A549 (cell line): ENCODE measurements at regions of chr19 and their contacts with region 1.

Region 1: GRCh38 chr19:47243776-47244547 is 12.4 kb upstream of the CCDC9 start:
- DNase-seq: peak; percentile 94 to 97
- ATAC-seq: peak; percentile 86 to 94
- H3K4me3 ChIP-seq: peak overlapping the region; percentile 49
- H3K27ac ChIP-seq: peak overlapping the region; percentile 82 to 98
- H3K4me1 ChIP-seq: peaks cover 33% of the 10 kb centered on the region
- CTCF ChIP-seq: peak; percentile 99
- EP300 ChIP-seq: peak; percentile 22 to 84; a peak in 3 of 5 replicates
- POLR2A ChIP-seq: no peak; the same call in 1 of the 2 replicates
- RAD21 ChIP-seq: peak; percentile 96 to 99

Region 2: DNA sequence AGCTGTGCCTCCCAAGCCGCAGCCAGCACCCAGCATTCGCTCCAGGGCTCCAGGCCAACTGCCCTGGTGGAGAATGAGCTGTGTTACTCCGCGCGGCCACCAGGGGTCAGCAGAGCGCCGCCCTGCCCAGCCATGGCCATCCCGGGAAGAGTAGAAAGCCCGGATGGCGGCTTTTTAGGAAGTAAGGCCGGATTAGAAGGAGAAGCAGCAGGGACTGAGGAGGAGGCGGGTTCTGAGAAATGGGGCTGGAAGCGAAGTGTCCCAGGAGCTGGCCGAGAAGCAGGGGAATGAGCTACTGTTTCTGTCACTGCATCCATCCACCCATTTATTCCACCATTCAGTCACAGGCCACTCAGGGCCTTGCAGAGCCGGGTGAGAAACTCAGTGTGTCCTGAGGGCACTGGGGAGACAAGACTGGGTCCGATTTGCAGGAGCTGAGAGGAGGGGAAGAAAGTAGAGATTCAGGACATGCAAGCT is 230.9 kb before region 1 on chr19:
- CTCF ChIA-PET with region 1: interaction called, 37 read pairs
- POLR2A ChIA-PET with region 1: interaction called, 4 read pairs
- DNase-seq: peak in 1 of 2 experiments; percentile 83
- ATAC-seq: peak; percentile 94 to 96
- H3K4me3 ChIP-seq: no peak overlapping the region
- H3K27ac ChIP-seq: peak overlapping the region; percentile 47 to 76
- H3K4me1 ChIP-seq: peaks cover 4% of the 10 kb centered on the region; the same call in 1 of the 3 replicates
- CTCF ChIP-seq: peak; percentile 95
- EP300 ChIP-seq: no peak
- POLR2A ChIP-seq: no peak
- RAD21 ChIP-seq: peak; percentile 98

Region 3: GRCh38 chr19:47130591-47131227 is 113.3 kb before region 1 on chr19 and contains the start of gene SAE1:
- CTCF ChIA-PET with region 1: interaction called, 65 read pairs
- POLR2A ChIA-PET with region 1: interaction called, 7 read pairs
- DNase-seq: peak; percentile 100
- ATAC-seq: peak; percentile 91 to 92
- H3K4me3 ChIP-seq: peak within 1 kb of the TSS; percentile 71
- H3K27ac ChIP-seq: peak within 1 kb of the TSS; percentile 92 to 93
- H3K4me1 ChIP-seq: peaks cover 35% of the 10 kb centered on the region
- CTCF ChIP-seq: peak; percentile 50
- EP300 ChIP-seq: no peak
- POLR2A ChIP-seq: peak; percentile 90
- RAD21 ChIP-seq: peak in 1 of 2 experiments; percentile 53; a peak in 2 of 5 replicates
- polyA plus RNA-seq, gene SAE1: 229 and 249 TPM in 2 replicates

Region 4: GRCh38 chr19:47168065-47168464 is 75.9 kb before region 1 on chr19:
- CTCF ChIA-PET with region 1: interaction called, 364 read pairs
- POLR2A ChIA-PET with region 1: interaction called, 3 read pairs
- DNase-seq: no peak
- ATAC-seq: no peak
- H3K4me3 ChIP-seq: no peak overlapping the region
- H3K27ac ChIP-seq: no peak overlapping the region
- H3K4me1 ChIP-seq: no peaks in the 10 kb centered on the region
- CTCF ChIP-seq: no peak
- EP300 ChIP-seq: no peak
- POLR2A ChIP-seq: no peak
- RAD21 ChIP-seq: no peak

Region 5: GRCh38 chr19:47195434-47195833 is 48.5 kb before region 1 on chr19:
- CTCF ChIA-PET with region 1: interaction called, 30 read pairs
- POLR2A ChIA-PET with region 1: interaction called, 5 read pairs
- DNase-seq: no peak
- ATAC-seq: no peak
- H3K4me3 ChIP-seq: no peak overlapping the region
- H3K27ac ChIP-seq: no peak overlapping the region
- H3K4me1 ChIP-seq: peaks cover 11% of the 10 kb centered on the region
- CTCF ChIP-seq: no peak
- EP300 ChIP-seq: no peak
- POLR2A ChIP-seq: no peak
- RAD21 ChIP-seq: no peak

Region 6: GRCh38 chr19:47225746-47226425 is 18.1 kb before region 1 on chr19:
- CTCF ChIA-PET with region 1: interaction called, 893 read pairs
- POLR2A ChIA-PET with region 1: interaction called, 118 read pairs
- DNase-seq: peak; percentile 89 to 91
- ATAC-seq: peak; percentile 35 to 70
- H3K4me3 ChIP-seq: peak overlapping the region; percentile 89
- H3K27ac ChIP-seq: peak overlapping the region; percentile 97 to 98
- H3K4me1 ChIP-seq: peaks cover 36% of the 10 kb centered on the region
- CTCF ChIP-seq: peak; percentile 28; the same call in 1 of the 3 replicates
- EP300 ChIP-seq: peak in 1 of 2 experiments; percentile 51; a peak in 1 of 5 replicates
- POLR2A ChIP-seq: peak; percentile 100
- RAD21 ChIP-seq: peak in 1 of 2 experiments; percentile 30; a peak in 1 of 5 replicates

Region 7: DNA sequence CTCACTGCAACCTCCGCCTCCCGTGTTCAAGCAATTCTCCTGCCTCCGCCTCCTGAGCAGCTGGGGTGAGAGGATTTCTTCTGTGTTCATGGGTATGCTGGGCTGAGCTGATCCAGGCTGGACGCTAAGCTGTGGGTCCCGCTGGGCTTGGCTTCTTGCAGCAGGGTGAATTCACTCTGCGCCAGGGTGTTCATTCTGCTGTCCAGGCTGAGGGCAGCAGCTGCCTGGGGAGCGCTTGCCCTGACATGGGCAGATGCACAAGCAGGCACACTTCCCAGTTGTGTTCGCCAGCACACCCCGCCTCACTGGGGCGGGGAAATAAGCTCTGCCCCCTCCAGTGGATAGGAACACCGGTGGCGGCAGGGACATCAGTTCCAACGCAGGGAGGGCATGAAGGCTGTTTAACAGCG is 23.4 kb after region 1 on chr19:
- CTCF ChIA-PET with region 1: interaction called, 32 read pairs
- POLR2A ChIA-PET with region 1: interaction called, 3 read pairs
- DNase-seq: no peak
- ATAC-seq: no peak
- H3K4me3 ChIP-seq: no peak overlapping the region
- H3K27ac ChIP-seq: no peak overlapping the region
- H3K4me1 ChIP-seq: peaks cover 2% of the 10 kb centered on the region; the same call in 1 of the 3 replicates
- CTCF ChIP-seq: no peak
- EP300 ChIP-seq: no peak
- POLR2A ChIP-seq: no peak
- RAD21 ChIP-seq: no peak

Region 8: GRCh38 chr19:47330466-47330869 is 86.5 kb after region 1 on chr19:
- CTCF ChIA-PET with region 1: no interaction called
- POLR2A ChIA-PET with region 1: no interaction called
- DNase-seq: no peak
- ATAC-seq: no peak
- H3K4me3 ChIP-seq: no peak overlapping the region
- H3K27ac ChIP-seq: peak overlapping the region; percentile 45 to 49; a peak in 4 of 6 replicates
- H3K4me1 ChIP-seq: peaks cover 24% of the 10 kb centered on the region
- CTCF ChIP-seq: no peak
- EP300 ChIP-seq: no peak
- POLR2A ChIP-seq: no peak
- RAD21 ChIP-seq: no peak

Region 9: DNA sequence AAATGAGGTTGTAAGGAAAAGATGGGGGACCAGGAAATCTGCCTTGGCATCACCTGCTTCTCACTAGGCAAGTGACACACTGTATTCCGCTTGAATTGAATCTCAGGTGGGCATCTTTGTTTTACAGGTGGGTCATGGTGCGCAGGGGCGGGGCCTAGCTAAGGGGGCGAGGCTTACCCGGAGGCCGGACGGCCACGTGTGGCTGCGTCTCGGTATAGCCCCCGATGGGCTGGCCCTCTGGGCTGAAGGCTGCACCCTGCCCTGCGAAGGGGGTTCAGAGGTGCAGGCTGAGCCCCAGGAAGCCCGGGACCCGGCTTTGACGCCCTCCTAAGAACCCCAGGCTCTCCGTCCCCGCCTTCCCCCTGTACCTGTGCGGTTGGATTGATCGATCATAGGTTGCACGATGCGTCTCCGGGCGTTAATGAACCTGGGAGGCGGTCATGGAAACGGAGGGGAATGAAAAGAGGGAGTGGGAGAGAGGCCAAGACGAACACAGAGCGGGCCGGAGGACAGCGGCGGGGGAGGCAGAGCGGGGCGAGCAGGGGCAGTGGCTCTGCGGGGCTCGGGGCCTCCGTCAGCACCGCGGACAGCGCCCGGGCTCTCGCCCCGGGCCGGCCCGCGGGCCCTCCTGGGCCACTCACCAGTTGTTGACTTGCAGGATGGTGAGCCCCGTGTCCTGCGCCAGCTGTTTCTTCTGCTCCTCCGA is 162.9 kb after region 1 on chr19:
- CTCF ChIA-PET with region 1: no interaction called
- POLR2A ChIA-PET with region 1: no interaction called
- DNase-seq: no peak
- ATAC-seq: peak; percentile 31 to 50; a peak in 5 of 6 replicates
- H3K4me3 ChIP-seq: no peak overlapping the region
- H3K27ac ChIP-seq: no peak overlapping the region
- H3K4me1 ChIP-seq: no peaks in the 10 kb centered on the region
- CTCF ChIP-seq: no peak
- EP300 ChIP-seq: no peak
- POLR2A ChIP-seq: no peak
- RAD21 ChIP-seq: no peak